ENCODE measurements at regions of chr19 and their contacts with region 1.

Region 1: GRCh38 chr19:18322759-18323460 is at the start of gene LSM4:
- DNase-seq: peak; percentile 100
- H3K4me3 Mint-ChIP-seq: peak within 1 kb of the TSS; percentile 83
- H3K27ac Mint-ChIP-seq: peak within 1 kb of the TSS; percentile 95
- H3K4me1 Mint-ChIP-seq: peaks cover 48% of the 10 kb centered on the region
- H3K27me3 Mint-ChIP-seq: no peaks in the 10 kb centered on the region
- total RNA-seq, gene LSM4: 356 to 361 TPM

Region 2: DNA sequence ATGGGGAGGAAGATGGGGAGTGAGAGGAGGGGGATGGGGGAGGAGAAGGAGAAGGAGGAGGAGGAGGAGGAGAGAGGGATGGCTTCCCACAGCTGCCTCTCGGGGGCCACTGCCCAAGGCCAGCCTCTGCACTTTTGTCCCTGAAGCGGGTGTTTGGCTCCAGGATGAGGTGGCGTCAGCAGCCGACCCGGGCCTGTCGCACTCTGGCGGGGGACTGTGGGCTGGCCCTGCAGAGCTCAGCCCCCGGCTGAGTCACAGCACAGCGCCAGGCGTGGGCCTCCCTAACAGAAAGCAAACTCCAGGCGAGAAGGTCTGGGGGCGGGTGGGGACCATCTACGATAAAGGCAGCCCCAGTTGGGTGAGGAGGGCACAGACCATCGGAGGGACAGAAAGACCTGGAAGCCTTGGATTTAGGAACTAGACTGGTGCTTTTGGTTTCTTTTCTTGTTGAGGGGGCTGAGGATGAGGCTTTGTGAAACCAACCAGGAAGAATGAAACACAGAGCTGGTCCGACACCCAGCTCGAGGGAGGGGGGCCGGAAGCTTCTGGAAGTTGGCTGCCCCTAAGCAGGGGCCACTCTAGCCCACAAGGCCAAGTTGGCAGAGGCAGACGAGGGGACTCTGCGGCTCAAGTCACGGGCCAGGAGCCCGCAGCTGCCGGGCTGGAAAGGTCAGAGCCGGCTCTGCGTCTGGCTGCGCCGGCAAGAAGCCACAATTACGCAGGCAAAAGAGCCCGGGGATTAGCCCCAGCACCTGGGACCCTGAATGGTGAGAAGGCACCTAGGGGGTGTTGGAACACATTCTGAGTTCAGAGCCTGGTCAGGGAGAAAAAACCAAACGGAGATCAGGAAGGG is 18.2 kb before region 1 on chr19:
- CTCF ChIA-PET with region 1: interaction called, 27 read pairs
- POLR2A ChIA-PET with region 1: interaction called, 34 read pairs
- intact Hi-C with region 1: loop called (anchors 1 kb)
- DNase-seq: peak; percentile 92
- H3K4me3 Mint-ChIP-seq: peak overlapping the region; percentile 96
- H3K27ac Mint-ChIP-seq: peak overlapping the region; percentile 99
- H3K4me1 Mint-ChIP-seq: peaks cover 41% of the 10 kb centered on the region
- H3K27me3 Mint-ChIP-seq: no peaks in the 10 kb centered on the region

Region 3: DNA sequence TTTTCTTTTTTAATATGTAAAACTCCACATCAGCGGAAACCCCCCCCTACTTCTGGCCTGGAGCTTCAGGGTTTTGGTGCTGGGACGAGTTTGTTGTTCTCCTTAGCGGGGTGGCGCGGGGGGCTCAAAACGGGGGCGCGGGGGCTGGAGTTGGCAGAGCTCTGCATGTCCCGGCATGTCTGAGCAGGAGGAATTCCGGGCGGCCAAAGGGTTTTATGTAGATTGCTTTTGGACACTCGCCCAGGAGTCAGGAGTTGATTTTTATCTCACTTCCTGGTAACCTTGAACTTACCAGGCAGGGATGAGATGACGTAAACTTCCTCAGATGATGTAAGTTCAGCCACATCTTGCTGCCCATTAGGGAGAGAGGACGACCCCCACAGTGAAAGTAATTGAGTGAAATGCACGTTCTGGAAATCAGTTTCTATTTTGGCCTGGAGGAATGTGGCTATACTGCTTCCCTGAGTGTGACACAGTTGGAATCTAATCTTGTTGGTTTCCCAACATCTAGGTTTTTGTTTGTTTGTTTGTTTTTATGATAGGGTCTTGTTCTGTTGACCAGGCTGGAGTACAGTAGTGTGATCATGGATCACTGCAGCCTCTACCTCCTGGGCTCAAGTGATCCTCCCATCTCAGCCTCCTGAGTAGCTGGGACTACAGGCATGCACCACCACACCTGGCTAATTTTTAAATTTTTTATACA is 42.1 kb after region 1 on chr19:
- CTCF ChIA-PET with region 1: no interaction called
- POLR2A ChIA-PET with region 1: no interaction called
- intact Hi-C with region 1: no loop called
- DNase-seq: no peak
- H3K4me3 Mint-ChIP-seq: no peak overlapping the region
- H3K27ac Mint-ChIP-seq: no peak overlapping the region
- H3K4me1 Mint-ChIP-seq: peaks cover 2% of the 10 kb centered on the region
- H3K27me3 Mint-ChIP-seq: no peaks in the 10 kb centered on the region

Region 4: DNA sequence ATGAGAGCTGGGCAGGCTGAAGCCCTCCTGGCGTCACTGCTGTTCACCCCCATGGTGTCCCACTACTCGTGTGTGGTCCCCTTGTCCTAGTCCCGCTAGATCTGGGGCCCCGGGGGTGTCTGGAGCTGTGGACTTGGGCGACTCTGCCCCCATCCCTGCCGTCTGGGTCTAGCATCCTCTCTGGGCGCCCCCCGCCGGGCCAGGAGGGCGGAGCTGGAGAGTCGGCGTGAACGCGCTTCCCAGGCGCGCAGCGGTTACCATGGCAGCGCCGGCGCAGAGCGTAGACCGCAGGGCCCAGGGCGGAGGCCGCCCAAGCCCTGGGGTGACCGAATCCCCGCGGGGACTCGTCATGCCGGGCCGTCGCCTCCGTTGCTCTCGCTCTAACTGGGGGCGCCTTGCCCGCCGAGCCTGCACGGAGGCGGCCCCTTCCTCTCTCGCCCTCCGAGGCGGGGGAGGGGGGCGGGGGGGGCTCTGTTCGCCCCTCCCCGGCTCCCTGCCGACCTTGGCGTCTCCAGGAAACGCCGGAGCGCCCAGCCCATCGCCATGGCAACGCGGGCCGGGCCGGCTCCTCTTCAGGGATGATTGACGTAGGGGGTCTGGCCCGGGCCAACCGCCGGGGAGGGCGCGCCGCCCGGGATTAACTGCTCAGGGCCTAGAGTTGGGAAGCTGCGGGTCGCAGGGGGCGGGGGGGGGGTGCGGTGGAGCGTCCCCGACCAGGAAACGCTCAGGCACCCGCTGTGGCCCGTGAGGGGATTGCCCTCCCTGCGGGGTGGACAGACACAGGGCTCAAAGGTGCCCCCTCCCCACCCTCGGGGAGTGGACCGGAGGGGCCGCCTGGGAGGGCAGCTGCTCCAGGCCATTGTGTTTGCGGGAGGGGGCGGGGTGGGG is 106.1 kb after region 1 on chr19:
- CTCF ChIA-PET with region 1: no interaction called
- POLR2A ChIA-PET with region 1: no interaction called
- intact Hi-C with region 1: no loop called
- DNase-seq: peak; percentile 87
- H3K4me3 Mint-ChIP-seq: no peak overlapping the region
- H3K27ac Mint-ChIP-seq: no peak overlapping the region
- H3K4me1 Mint-ChIP-seq: peaks cover 31% of the 10 kb centered on the region
- H3K27me3 Mint-ChIP-seq: no peaks in the 10 kb centered on the region